HEK293T (cell line): ENCODE measurements at regions of chr1 and their contacts with region 1.

Region 1: GRCh38 chr1:161440312-161440894 is 64.9 kb upstream of the FCGR2A start:
- DNase-seq: peak; percentile 81

Region 2: DNA sequence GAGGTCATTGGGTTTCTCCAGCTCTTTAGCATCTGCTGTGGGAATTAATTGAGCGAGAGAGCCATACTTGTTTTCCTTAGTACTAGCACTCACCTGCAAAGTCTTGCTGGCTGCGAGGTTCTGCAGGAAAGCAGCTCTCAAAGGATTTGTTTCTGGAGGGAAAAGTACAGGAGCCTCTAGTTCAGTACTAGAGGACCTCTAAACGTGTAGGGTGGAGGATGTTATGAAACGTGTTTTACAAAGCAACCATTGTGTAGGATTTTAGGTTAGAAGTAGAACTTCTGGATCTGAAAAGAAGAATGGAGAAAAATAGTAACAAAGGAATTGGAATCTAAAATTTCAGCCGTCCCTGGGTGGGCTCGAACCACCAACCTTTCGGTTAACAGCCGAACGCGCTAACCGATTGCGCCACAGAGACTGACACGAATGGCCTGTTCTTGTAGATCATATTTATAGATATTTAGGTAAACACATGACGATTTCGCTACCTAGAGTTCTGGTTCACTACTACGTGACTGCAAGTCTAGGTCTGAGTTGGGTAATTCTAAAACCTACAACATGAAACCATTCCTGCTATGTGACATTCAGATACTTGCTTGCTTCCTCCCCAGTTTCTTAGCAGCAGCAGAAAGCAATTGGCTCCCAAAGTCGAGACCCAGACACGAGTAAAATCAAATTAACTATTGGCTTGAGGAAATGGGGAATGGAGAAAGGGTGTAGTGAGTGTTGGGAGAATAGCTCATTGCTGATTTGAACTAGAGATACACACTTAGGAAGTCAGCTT is 12.5 kb before region 1 on chr1:
- CTCF ChIA-PET with region 1: interaction called, 17 read pairs
- POLR2A ChIA-PET with region 1: interaction called, 4 read pairs
- DNase-seq: peak; percentile 67